Dendritic cell treated with granulocyte-macrophage colony-stimulating factor and Interleukin-4, amounts not matched to agents 40 ng/mL and 50 ng/mL, for 4 days (primary cell): ENCODE measurements at regions of chr19 and their contacts with region 1.

Region 1: DNA sequence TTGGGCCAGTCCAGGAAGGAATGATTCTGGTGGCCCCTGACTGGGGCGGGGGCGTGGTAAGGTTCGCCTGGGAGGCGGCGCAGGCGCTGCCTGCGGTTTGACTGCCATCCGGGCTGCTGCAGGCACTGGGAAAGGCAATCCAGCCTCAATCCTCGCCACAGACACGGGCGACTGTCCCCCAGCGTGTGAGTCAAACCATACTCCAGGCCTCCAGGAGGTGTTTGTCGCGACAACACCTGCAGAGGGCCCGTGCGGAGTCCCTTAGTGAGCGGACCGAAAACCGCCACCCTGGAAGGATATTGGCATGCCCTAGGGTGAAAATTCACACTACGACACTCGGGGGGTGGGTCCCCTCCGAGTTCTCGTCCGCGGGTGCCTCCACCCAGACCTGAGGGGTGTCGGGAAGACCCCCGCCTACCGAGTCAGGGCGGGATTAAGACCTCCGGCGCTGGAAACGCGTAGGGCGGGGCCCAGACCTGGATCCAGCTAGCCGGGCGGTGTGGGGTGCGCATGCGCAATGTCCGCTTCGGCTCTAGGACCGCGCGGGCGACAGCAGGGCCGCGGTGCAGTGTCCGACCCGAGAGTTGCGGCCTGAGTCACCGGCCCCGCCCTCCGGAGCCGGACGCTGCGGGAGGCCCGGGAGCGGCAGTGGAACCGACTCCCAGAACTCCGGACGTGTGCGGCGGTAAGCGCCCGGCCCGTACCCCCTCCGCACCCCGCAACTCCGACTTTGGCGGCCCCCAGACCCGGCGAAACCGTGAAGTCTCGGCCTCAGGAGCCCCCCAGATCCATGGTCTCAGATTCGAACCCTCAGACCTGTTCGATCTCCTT is at the start of gene CAPNS1:
- H3K4me3 Mint-ChIP-seq: peak within 1 kb of the TSS; percentile 98
- H3K27ac Mint-ChIP-seq: peak within 1 kb of the TSS; percentile 94
- H3K4me1 Mint-ChIP-seq: peaks cover 39% of the 10 kb centered on the region
- H3K27me3 Mint-ChIP-seq: peaks cover 6% of the 10 kb centered on the region

Region 2: GRCh38 chr19:36203293-36203692 is 63.6 kb after region 1 on chr19:
- intact Hi-C with region 1: no loop called
- H3K4me3 Mint-ChIP-seq: no peak overlapping the region
- H3K27ac Mint-ChIP-seq: no peak overlapping the region
- H3K4me1 Mint-ChIP-seq: no peaks in the 10 kb centered on the region
- H3K27me3 Mint-ChIP-seq: no peaks in the 10 kb centered on the region

Region 3: DNA sequence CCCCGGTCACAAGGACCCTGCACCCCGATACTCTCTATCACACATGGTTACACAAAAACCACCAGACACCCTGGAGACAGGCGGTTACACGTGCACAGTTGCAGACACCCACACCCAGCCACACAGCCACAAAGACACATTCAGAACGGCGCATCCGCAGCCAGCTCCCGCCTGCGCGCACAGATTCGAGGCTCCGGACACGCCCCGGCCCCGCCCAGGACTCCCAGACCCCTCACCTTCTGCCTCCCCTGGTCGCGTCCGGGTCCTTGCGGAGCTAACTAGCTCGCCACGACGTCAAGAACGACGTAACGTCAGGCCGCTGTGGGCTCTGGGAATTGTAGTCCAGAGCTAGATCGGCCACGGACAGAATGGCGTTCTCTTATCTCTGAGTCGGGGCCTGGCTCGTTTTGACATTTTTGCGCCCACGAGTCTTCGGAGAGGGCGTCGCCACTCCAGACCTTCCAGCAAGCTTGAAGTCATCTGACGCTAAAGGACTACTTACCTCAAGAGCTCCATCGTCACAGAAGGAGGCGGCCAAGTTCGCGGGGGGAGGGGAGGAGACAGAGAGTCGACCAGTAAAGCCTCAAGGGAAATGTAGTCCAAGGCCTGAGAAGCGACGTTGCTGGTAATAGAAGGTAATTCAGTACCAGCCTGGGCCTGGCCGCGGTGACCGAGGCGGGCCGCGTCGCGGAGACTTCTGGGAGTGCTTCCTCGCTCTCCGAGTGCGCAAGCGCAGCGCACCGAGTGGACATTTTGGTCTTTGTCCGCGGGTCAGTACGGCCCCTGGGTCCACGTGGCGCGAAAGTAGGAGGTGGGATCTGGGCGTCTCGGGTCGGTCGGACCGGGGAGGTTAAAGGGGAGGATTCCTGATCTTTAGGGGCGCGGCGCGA is 74.9 kb after region 1 on chr19 and contains the starts of genes ZNF146 and ZNF565:
- intact Hi-C with region 1: loop called (anchors 10 kb)
- H3K4me3 Mint-ChIP-seq: no peak within 1 kb of the TSS
- H3K27ac Mint-ChIP-seq: no peak within 1 kb of the TSS
- H3K4me1 Mint-ChIP-seq: peaks cover 7% of the 10 kb centered on the region
- H3K27me3 Mint-ChIP-seq: no peaks in the 10 kb centered on the region